B cell (primary cell): ENCODE measurements at regions of chr17 and their contacts with region 1.

Region 1: DNA sequence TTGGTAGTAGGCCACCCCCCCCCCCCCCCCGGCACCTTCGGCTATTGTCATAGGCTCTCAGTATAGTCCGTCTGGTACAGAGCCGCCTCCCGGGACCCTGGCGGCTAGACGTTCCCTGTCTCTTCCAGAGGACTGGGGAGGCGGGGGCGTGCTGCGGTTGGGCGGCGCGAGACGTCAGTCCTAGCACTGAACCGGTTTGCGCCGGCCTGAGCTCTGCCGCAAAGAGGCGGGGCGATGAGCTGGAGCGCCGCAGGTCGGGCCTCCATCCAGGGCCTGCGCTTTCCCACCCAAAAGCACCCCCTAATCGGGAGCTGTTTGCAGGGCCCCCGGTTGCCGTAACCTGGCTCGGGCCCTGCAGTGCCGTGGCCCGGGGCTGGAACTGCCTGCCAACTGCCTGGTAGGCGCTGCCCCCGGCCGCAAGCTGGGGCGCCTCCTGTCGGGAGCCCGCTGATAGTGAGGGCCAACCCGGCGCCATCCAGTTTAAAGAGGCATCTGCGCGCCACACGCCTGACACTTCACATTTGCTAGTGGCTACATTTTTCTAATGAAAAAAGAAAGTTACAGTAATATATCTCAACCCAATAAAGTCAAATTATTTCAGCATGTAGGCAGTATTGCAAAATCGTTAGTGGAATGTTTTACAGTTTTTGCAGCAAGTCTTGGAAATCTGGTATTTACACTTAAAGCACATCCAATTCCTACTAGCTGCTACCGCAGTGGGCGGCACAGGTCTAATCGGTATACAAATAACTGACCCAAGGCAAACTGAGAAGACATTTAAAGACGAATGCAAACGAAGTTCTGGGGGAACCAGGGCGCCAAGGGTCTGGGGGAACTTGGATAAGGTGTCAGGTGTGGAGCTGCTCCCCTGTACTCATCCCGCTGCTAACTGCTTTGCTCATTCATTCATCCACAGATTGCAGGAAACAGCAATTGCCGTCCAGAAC is 748 bp upstream of the USP22 start:
- DNase-seq: peak; percentile 98
- ATAC-seq: peak; percentile 75
- H3K4me3 ChIP-seq: peak overlapping the region; percentile 63 to 68 (median 65)
- H3K4me3 Mint-ChIP-seq: peak overlapping the region; percentile 81
- H3K27ac ChIP-seq: peak overlapping the region; percentile 95
- H3K27ac Mint-ChIP-seq: peak overlapping the region; percentile 90
- H3K4me1 ChIP-seq: peaks cover 24 to 37% of the 10 kb centered on the region in 2 donors
- H3K4me1 Mint-ChIP-seq: peaks cover 32% of the 10 kb centered on the region
- H3K27me3 ChIP-seq: no peaks in the 10 kb centered on the region
- H3K27me3 Mint-ChIP-seq: no peaks in the 10 kb centered on the region
- CTCF ChIP-seq: peak; percentile 92

Region 2: DNA sequence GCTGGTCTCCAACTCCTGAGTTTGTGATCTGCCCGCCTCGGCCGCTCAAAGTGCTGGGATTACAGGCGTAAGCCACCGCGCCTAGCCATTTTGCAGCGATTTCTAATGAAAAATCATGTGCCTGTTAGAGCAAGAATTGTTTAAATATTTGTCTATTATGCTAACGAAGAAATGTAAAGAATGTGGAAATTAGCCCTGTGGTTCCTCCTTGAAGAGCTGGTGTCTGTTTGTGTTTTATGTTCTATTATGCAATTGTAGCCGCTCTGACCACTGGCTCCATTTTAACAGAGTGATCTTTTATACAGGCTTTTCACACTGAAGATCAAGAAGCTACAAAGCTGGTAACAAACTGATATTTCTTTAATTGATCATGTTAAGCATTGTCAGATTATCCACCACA is 218.0 kb before region 1 on chr17:
- CTCF ChIA-PET with region 1: no interaction called
- POLR2A ChIA-PET with region 1: no interaction called
- intact Hi-C with region 1: no loop called
- DNase-seq: no peak
- ATAC-seq: no peak
- H3K4me3 ChIP-seq: no peak overlapping the region
- H3K4me3 Mint-ChIP-seq: no peak overlapping the region
- H3K27ac ChIP-seq: no peak overlapping the region
- H3K27ac Mint-ChIP-seq: no peak overlapping the region
- H3K4me1 ChIP-seq: no peaks in the 10 kb centered on the region
- H3K4me1 Mint-ChIP-seq: no peaks in the 10 kb centered on the region
- H3K27me3 ChIP-seq: no peaks in the 10 kb centered on the region
- H3K27me3 Mint-ChIP-seq: peaks cover 5% of the 10 kb centered on the region
- CTCF ChIP-seq: no peak

Region 3: GRCh38 chr17:20955427-20956323 is 87.9 kb before region 1 on chr17:
- CTCF ChIA-PET with region 1: no interaction called
- POLR2A ChIA-PET with region 1: no interaction called
- intact Hi-C with region 1: no loop called
- DNase-seq: no peak
- ATAC-seq: no peak
- H3K4me3 ChIP-seq: no peak overlapping the region
- H3K4me3 Mint-ChIP-seq: no peak overlapping the region
- H3K27ac ChIP-seq: no peak overlapping the region
- H3K27ac Mint-ChIP-seq: no peak overlapping the region
- H3K4me1 ChIP-seq: no peaks in the 10 kb centered on the region
- H3K4me1 Mint-ChIP-seq: no peaks in the 10 kb centered on the region
- H3K27me3 ChIP-seq: peaks cover 0 to 4% (median 0%) of the 10 kb centered on the region in 4 experiments
- H3K27me3 Mint-ChIP-seq: peaks cover 25% of the 10 kb centered on the region
- CTCF ChIP-seq: no peak

Region 4: GRCh38 chr17:20966870-20967269 is 76.7 kb before region 1 on chr17:
- CTCF ChIA-PET with region 1: no interaction called
- POLR2A ChIA-PET with region 1: no interaction called
- intact Hi-C with region 1: no loop called
- DNase-seq: peak; percentile 60
- ATAC-seq: peak; percentile 45
- H3K4me3 ChIP-seq: peak overlapping the region in 1 of 5 experiments; percentile 4
- H3K4me3 Mint-ChIP-seq: no peak overlapping the region
- H3K27ac ChIP-seq: no peak overlapping the region
- H3K27ac Mint-ChIP-seq: no peak overlapping the region
- H3K4me1 ChIP-seq: peaks cover 47 to 49% of the 10 kb centered on the region in 2 donors
- H3K4me1 Mint-ChIP-seq: peaks cover 54% of the 10 kb centered on the region
- H3K27me3 ChIP-seq: no peaks in the 10 kb centered on the region
- H3K27me3 Mint-ChIP-seq: peaks cover 7% of the 10 kb centered on the region
- CTCF ChIP-seq: no peak

Region 5: DNA sequence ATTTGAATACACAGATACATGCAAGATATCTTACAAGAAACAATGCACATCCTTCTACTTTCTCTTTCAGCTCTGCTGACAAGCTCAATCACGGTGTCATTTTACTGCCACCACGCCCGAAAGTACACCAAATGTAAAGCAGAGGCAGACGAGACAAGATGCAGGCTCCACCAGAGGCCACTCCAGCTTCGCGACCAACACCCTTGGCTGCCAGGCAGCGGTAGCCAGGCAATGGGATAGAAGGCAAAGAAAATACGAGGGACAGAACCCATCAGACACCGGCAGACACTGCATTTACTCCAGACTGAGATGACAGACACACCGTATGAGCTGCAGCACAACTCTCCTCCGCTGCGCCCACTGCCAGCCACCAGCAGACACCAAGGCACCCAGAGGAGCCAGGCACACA is 41.7 kb before region 1 on chr17:
- CTCF ChIA-PET with region 1: no interaction called
- POLR2A ChIA-PET with region 1: no interaction called
- intact Hi-C with region 1: no loop called
- DNase-seq: no peak
- ATAC-seq: no peak
- H3K4me3 ChIP-seq: no peak overlapping the region
- H3K4me3 Mint-ChIP-seq: no peak overlapping the region
- H3K27ac ChIP-seq: no peak overlapping the region
- H3K27ac Mint-ChIP-seq: peak overlapping the region; percentile 10
- H3K4me1 ChIP-seq: no peaks in the 10 kb centered on the region
- H3K4me1 Mint-ChIP-seq: peaks cover 2% of the 10 kb centered on the region
- H3K27me3 ChIP-seq: no peaks in the 10 kb centered on the region
- H3K27me3 Mint-ChIP-seq: no peaks in the 10 kb centered on the region
- CTCF ChIP-seq: no peak

Region 6: GRCh38 chr17:21019976-21020586 is 23.5 kb before region 1 on chr17:
- CTCF ChIA-PET with region 1: interaction called, 22 read pairs
- POLR2A ChIA-PET with region 1: no interaction called
- intact Hi-C with region 1: loop called (anchors 1 kb)
- DNase-seq: peak; percentile 61
- ATAC-seq: peak; percentile 84
- H3K4me3 ChIP-seq: no peak overlapping the region
- H3K4me3 Mint-ChIP-seq: peak overlapping the region; percentile 60
- H3K27ac ChIP-seq: peak overlapping the region; percentile 5 to 29
- H3K27ac Mint-ChIP-seq: peak overlapping the region; percentile 82
- H3K4me1 ChIP-seq: peaks cover 10 to 28% of the 10 kb centered on the region in 2 donors
- H3K4me1 Mint-ChIP-seq: peaks cover 37% of the 10 kb centered on the region
- H3K27me3 ChIP-seq: no peaks in the 10 kb centered on the region
- H3K27me3 Mint-ChIP-seq: no peaks in the 10 kb centered on the region
- CTCF ChIP-seq: peak; percentile 48

Region 7: DNA sequence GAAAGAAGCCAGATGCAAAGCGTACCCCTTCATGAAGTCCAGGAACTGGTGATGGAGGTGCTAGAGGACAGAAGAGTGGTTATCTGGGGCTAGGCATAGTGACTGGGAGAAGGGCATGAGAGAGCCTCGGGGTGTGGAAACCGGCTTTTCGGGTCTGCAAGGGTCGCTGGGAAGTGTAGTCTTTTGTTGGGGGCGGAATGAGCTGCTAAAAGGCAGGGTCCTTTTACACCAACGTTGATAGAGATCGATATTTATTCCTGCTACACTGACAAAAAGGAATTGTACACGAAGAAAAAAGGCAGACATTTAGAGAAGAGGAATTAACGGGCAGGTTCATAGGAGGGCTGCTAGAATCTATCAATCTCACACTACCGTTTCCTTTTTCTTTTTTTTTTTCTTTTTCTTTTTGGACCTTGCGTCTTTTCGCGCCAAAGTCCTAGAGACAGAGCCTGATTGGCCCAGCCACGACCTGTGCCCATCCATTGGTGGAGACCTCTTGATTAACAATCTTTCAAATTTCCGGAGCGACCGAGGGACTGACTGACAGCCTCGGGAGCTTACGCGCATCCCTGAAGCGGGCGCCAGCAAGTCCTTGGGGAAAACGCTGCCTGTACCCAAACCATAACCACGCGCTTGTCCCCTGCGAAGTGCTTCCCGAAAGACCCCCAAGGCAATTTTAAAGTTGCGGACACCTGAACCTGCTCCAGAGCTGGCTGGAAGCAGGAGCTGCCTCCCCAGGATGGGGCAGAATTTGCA is 55.6 kb after region 1 on chr17:
- CTCF ChIA-PET with region 1: interaction called, 33 read pairs
- POLR2A ChIA-PET with region 1: interaction called, 6 read pairs
- intact Hi-C with region 1: loop called (anchors 1 kb)
- DNase-seq: peak; percentile 84
- ATAC-seq: peak; percentile 94
- H3K4me3 ChIP-seq: peak overlapping the region; percentile 60 to 82 (median 68)
- H3K4me3 Mint-ChIP-seq: peak overlapping the region; percentile 96
- H3K27ac ChIP-seq: no peak overlapping the region
- H3K27ac Mint-ChIP-seq: peak overlapping the region; percentile 46
- H3K4me1 ChIP-seq: peaks cover 4 to 19% of the 10 kb centered on the region in 2 donors
- H3K4me1 Mint-ChIP-seq: peaks cover 15% of the 10 kb centered on the region
- H3K27me3 ChIP-seq: no peaks in the 10 kb centered on the region
- H3K27me3 Mint-ChIP-seq: no peaks in the 10 kb centered on the region
- CTCF ChIP-seq: no peak

Region 8: DNA sequence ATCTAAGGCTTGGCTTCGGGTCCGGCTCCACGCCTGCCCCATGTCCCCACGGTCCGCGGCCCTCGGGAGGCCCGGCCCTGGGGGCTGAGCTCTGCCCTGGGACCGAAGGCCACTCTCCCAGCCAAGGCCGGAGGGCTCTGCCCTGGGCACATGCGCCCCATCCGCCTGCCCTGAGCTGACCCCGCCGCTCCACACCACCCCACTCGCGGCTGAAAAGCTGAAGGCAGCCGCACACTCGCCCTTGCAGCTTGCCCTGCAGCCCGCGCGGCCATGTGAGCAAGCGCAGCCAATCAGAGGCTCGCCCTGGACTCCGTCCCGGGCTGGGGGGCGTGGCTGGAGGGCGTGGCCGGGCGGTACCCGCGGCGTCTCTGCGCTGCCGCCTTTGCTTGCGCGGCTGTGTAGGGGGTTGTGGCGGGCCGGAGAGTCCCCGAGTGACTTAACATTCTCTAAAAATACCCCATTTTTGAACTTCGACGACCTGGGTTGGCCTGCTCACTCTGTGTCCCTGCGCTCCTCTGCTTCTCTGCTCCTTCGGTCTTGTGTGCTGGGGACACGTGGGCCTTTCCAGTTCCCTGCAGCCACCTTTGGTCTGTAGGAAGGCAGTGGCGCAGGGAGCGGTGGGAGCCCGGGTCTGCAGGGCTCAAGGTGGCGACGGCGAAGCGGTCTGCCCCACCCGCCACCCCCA is 232.2 kb after region 1 on chr17:
- CTCF ChIA-PET with region 1: interaction called, 10 read pairs
- POLR2A ChIA-PET with region 1: interaction called, 5 read pairs
- intact Hi-C with region 1: no loop called
- DNase-seq: peak; percentile 93
- ATAC-seq: peak; percentile 86
- H3K4me3 ChIP-seq: peak overlapping the region; percentile 34 to 84 (median 71)
- H3K4me3 Mint-ChIP-seq: peak overlapping the region; percentile 98
- H3K27ac ChIP-seq: peak overlapping the region; percentile 86
- H3K27ac Mint-ChIP-seq: peak overlapping the region; percentile 86
- H3K4me1 ChIP-seq: peaks cover 35 to 41% of the 10 kb centered on the region in 2 donors
- H3K4me1 Mint-ChIP-seq: peaks cover 34% of the 10 kb centered on the region
- H3K27me3 ChIP-seq: no peaks in the 10 kb centered on the region
- H3K27me3 Mint-ChIP-seq: no peaks in the 10 kb centered on the region
- CTCF ChIP-seq: peak; percentile 34

Region 9: GRCh38 chr17:21551081-21551881 is 507.7 kb after region 1 on chr17:
- CTCF ChIA-PET with region 1: no interaction called
- POLR2A ChIA-PET with region 1: no interaction called
- intact Hi-C with region 1: loop called (anchors 2 kb)
- DNase-seq: peak; percentile 83
- ATAC-seq: peak; percentile 96
- H3K4me3 ChIP-seq: peak overlapping the region in 4 of 5 experiments; percentile 70 to 82 (median 72)
- H3K4me3 Mint-ChIP-seq: peak overlapping the region; percentile 89
- H3K27ac ChIP-seq: no peak overlapping the region
- H3K27ac Mint-ChIP-seq: peak overlapping the region; percentile 50
- H3K4me1 ChIP-seq: peaks cover 10 to 11% of the 10 kb centered on the region in 2 donors
- H3K4me1 Mint-ChIP-seq: peaks cover 19% of the 10 kb centered on the region
- H3K27me3 ChIP-seq: peaks cover 0 to 16% (median 4%) of the 10 kb centered on the region in 4 experiments
- H3K27me3 Mint-ChIP-seq: peaks cover 31% of the 10 kb centered on the region
- CTCF ChIP-seq: no peak